IMR-90 (cell line): ENCODE measurements at regions of chr5 and their contacts with region 1.

Region 1: GRCh38 chr5:119328753-119329602 is 26.8 kb upstream of the TNFAIP8 start:
- DNase-seq: peak; percentile 87
- ATAC-seq: peak; percentile 65
- H3K4me3 ChIP-seq: no peak overlapping the region
- H3K27ac ChIP-seq: peak overlapping the region; percentile 50; the same call in 1 of the 2 replicates
- H3K4me1 ChIP-seq: peaks cover 31% of the 10 kb centered on the region
- H3K27me3 ChIP-seq: no peaks in the 10 kb centered on the region
- CTCF ChIP-seq: no peak
- POLR2A ChIP-seq: no peak
- RAD21 ChIP-seq: 0 out of 2 replicates have a peak, but pooled peaks have one; percentile 17

Region 2: GRCh38 chr5:118987988-118988865 is 340.8 kb before region 1 on chr5 and contains the start of gene DTWD2:
- CTCF ChIA-PET with region 1: no interaction called
- POLR2A ChIA-PET with region 1: no interaction called
- dilution Hi-C with region 1: no loop called
- in situ Hi-C with region 1: no loop called
- intact Hi-C with region 1: loop called (anchors 2 kb)
- DNase-seq: peak; percentile 88
- ATAC-seq: peak; percentile 98
- H3K4me3 ChIP-seq: peak within 1 kb of the TSS; percentile 66
- H3K27ac ChIP-seq: peak within 1 kb of the TSS; percentile 66
- H3K4me1 ChIP-seq: no peaks in the 10 kb centered on the region
- H3K27me3 ChIP-seq: no peaks in the 10 kb centered on the region
- CTCF ChIP-seq: peak; percentile 93
- POLR2A ChIP-seq: no peak
- RAD21 ChIP-seq: peak; percentile 82
- total RNA-seq, gene DTWD2: 1.8 and 2.5 TPM in 2 replicates

Region 3: GRCh38 chr5:119022017-119022745 is 306.8 kb before region 1 on chr5:
- CTCF ChIA-PET with region 1: no interaction called
- POLR2A ChIA-PET with region 1: no interaction called
- dilution Hi-C with region 1: no loop called
- in situ Hi-C with region 1: no loop called
- intact Hi-C with region 1: no loop called
- DNase-seq: peak; percentile 57
- ATAC-seq: peak; percentile 80
- H3K4me3 ChIP-seq: no peak overlapping the region
- H3K27ac ChIP-seq: no peak overlapping the region
- H3K4me1 ChIP-seq: no peaks in the 10 kb centered on the region
- H3K27me3 ChIP-seq: no peaks in the 10 kb centered on the region
- CTCF ChIP-seq: peak; percentile 66
- POLR2A ChIP-seq: no peak
- RAD21 ChIP-seq: peak; percentile 80

Region 4: GRCh38 chr5:119255571-119256356 is 73.2 kb before region 1 on chr5:
- CTCF ChIA-PET with region 1: no interaction called
- POLR2A ChIA-PET with region 1: interaction called, 17 read pairs
- dilution Hi-C with region 1: no loop called
- in situ Hi-C with region 1: no loop called
- intact Hi-C with region 1: no loop called
- DNase-seq: peak; percentile 5
- ATAC-seq: no peak; the same call in 1 of the 2 replicates
- H3K4me3 ChIP-seq: no peak overlapping the region
- H3K27ac ChIP-seq: no peak overlapping the region
- H3K4me1 ChIP-seq: no peaks in the 10 kb centered on the region
- H3K27me3 ChIP-seq: no peaks in the 10 kb centered on the region
- CTCF ChIP-seq: peak; percentile 19; the same call in 1 of the 2 replicates
- POLR2A ChIP-seq: no peak
- RAD21 ChIP-seq: peak; percentile 33; the same call in 1 of the 2 replicates

Region 5: GRCh38 chr5:119267958-119268386 is 61.0 kb before region 1 on chr5:
- CTCF ChIA-PET with region 1: interaction called, 3 read pairs
- POLR2A ChIA-PET with region 1: no interaction called
- dilution Hi-C with region 1: no loop called
- in situ Hi-C with region 1: no loop called
- intact Hi-C with region 1: loop called (anchors 2 kb)
- DNase-seq: peak; percentile 95
- ATAC-seq: peak; percentile 90
- H3K4me3 ChIP-seq: peak overlapping the region; percentile 76
- H3K27ac ChIP-seq: peak overlapping the region; percentile 76
- H3K4me1 ChIP-seq: peaks cover 4% of the 10 kb centered on the region; the same call in 1 of the 2 replicates
- H3K27me3 ChIP-seq: no peaks in the 10 kb centered on the region
- CTCF ChIP-seq: peak; percentile 62
- POLR2A ChIP-seq: no peak
- RAD21 ChIP-seq: peak; percentile 39

Region 6: DNA sequence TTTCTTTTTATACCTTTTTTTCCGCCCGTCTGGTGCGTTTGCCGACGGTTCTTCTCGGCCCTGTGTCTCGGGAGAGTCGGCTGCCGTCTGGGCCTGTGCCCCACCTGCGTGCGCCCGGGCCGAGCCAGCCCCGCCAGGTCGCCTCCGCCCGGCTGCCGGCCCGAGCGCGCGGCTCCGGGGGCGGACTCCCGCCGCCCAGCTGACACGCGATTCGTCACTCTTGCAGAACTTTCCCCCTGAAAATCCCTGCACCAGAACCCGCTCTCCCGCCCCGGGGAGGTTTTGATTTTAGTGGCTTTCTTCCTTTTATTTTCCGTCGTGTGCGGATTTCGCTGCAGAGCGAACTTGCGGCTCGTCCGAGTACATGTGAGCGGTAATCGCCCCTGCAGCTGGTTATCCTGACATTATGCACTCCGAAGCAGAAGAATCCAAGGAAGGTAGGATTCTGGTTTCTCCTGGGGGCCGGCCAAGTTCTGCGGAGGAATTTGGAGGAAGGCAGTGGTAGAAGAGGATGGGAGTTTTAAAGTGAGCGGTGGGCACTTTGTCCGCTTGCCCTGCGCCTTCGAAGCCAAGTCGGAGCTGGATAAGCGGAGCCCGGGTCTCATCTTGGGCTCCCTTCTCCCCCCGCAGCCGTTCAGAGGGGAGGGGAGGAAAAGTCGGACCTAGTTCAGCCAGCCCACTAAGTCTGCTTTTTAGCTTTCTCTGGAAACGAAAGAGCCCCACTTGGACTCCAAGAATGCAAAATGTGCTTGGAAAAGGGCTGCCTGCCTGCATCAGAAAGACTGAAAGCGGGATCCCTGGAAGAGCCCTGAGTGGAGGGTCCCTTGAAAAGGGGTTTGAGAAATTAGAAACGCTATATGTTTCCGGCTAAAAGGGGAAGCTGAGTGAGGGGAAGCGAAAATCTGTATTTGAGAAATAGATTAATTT is 27.0 kb after region 1 on chr5 and contains the start of gene TNFAIP8:
- CTCF ChIA-PET with region 1: interaction called, 3 read pairs
- POLR2A ChIA-PET with region 1: interaction called, 6 read pairs
- dilution Hi-C with region 1: no loop called
- in situ Hi-C with region 1: no loop called
- intact Hi-C with region 1: loop called (anchors 1 kb)
- DNase-seq: peak; percentile 70
- ATAC-seq: peak; percentile 78
- H3K4me3 ChIP-seq: peak within 1 kb of the TSS; percentile 74
- H3K27ac ChIP-seq: peak within 1 kb of the TSS; percentile 88
- H3K4me1 ChIP-seq: peaks cover 14% of the 10 kb centered on the region
- H3K27me3 ChIP-seq: no peaks in the 10 kb centered on the region
- CTCF ChIP-seq: no peak
- POLR2A ChIP-seq: no peak
- RAD21 ChIP-seq: no peak
- total RNA-seq, gene TNFAIP8: 29.9 and 42.5 TPM in 2 replicates

Region 7: GRCh38 chr5:119405419-119405818 is 76.4 kb after region 1 on chr5:
- CTCF ChIA-PET with region 1: no interaction called
- POLR2A ChIA-PET with region 1: interaction called, 11 read pairs
- dilution Hi-C with region 1: no loop called
- in situ Hi-C with region 1: no loop called
- intact Hi-C with region 1: no loop called
- DNase-seq: no peak
- ATAC-seq: no peak
- H3K4me3 ChIP-seq: no peak overlapping the region
- H3K27ac ChIP-seq: no peak overlapping the region
- H3K4me1 ChIP-seq: 0 out of 2 replicates have a peak, but pooled peaks cover 1% of the 10 kb centered on the region
- H3K27me3 ChIP-seq: peaks cover 7% of the 10 kb centered on the region
- CTCF ChIP-seq: no peak
- POLR2A ChIP-seq: no peak
- RAD21 ChIP-seq: no peak